ENCODE measurements at regions of chr17 and their contacts with region 1.

Region 1: GRCh38 chr17:42388381-42389134 is at the start of gene STAT3:
- DNase-seq: peak; percentile 100
- H3K4me3 Mint-ChIP-seq: peak within 1 kb of the TSS; percentile 97
- H3K27ac Mint-ChIP-seq: peak within 1 kb of the TSS; percentile 100
- H3K4me1 Mint-ChIP-seq: peaks cover 47% of the 10 kb centered on the region
- H3K27me3 Mint-ChIP-seq: no peaks in the 10 kb centered on the region
- total RNA-seq, gene STAT3: 404 to 408 TPM

Region 2: GRCh38 chr17:42212382-42212781 is 176.2 kb before region 1 on chr17:
- CTCF ChIA-PET with region 1: no interaction called
- intact Hi-C with region 1: no loop called
- DNase-seq: no peak
- H3K4me3 Mint-ChIP-seq: no peak overlapping the region
- H3K27ac Mint-ChIP-seq: no peak overlapping the region
- H3K4me1 Mint-ChIP-seq: no peaks in the 10 kb centered on the region
- H3K27me3 Mint-ChIP-seq: no peaks in the 10 kb centered on the region

Region 3: GRCh38 chr17:42248351-42249179 is 140.0 kb before region 1 on chr17:
- CTCF ChIA-PET with region 1: no interaction called
- intact Hi-C with region 1: loop called (anchors 1 kb)
- DNase-seq: peak; percentile 92
- H3K4me3 Mint-ChIP-seq: peak overlapping the region; percentile 74
- H3K27ac Mint-ChIP-seq: peak overlapping the region; percentile 97
- H3K4me1 Mint-ChIP-seq: peaks cover 71% of the 10 kb centered on the region
- H3K27me3 Mint-ChIP-seq: no peaks in the 10 kb centered on the region

Region 4: GRCh38 chr17:42312285-42313130 is 76.0 kb before region 1 on chr17:
- CTCF ChIA-PET with region 1: interaction called, 18 read pairs
- intact Hi-C with region 1: loop called (anchors 1 kb)
- DNase-seq: peak; percentile 95
- H3K4me3 Mint-ChIP-seq: peak overlapping the region; percentile 44
- H3K27ac Mint-ChIP-seq: peak overlapping the region; percentile 92
- H3K4me1 Mint-ChIP-seq: peaks cover 86% of the 10 kb centered on the region
- H3K27me3 Mint-ChIP-seq: no peaks in the 10 kb centered on the region

Region 5: DNA sequence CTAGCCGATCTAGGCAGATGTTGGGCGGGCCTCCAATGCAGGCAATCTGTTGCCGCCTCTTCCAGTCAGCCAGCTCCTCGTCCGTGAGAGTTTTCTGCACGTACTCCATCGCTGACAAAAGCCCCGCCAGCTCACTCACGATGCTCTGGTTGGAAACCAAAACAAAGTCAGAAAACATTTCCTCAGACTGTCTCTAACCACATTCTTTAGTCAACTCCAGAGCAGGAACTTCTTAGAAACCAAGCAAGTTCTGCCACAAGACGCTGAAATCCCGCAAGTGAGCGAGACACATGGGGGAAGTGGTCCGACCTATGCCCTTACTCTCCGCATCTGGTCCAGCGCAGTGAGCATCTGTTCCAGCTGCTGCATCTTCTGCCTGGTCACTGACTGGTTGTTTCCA is 51.1 kb before region 1 on chr17:
- CTCF ChIA-PET with region 1: interaction called, 7 read pairs
- intact Hi-C with region 1: loop called (anchors 1 kb)
- DNase-seq: peak; percentile 92
- H3K4me3 Mint-ChIP-seq: peak overlapping the region; percentile 43
- H3K27ac Mint-ChIP-seq: peak overlapping the region; percentile 90
- H3K4me1 Mint-ChIP-seq: peaks cover 84% of the 10 kb centered on the region
- H3K27me3 Mint-ChIP-seq: no peaks in the 10 kb centered on the region

Region 6: DNA sequence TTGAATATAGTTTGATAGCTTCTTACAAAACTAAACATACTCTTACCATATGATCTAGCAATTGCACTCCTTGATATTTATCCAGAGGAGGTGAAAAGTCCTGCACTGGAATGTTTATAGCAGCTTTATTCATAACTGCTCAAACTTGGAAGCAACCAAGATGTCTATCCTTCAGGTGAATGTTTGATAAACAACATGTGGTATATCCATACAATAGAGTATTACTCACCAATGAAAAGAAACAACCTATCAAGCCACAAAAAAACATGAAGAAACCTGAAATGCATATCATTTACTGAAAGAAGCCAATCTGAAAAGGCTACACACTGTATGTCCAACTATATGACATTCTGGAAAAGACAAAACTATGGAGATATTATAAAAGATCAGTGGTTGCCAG is 16.4 kb before region 1 on chr17:
- CTCF ChIA-PET with region 1: no interaction called
- intact Hi-C with region 1: no loop called
- DNase-seq: no peak
- H3K4me3 Mint-ChIP-seq: no peak overlapping the region
- H3K27ac Mint-ChIP-seq: no peak overlapping the region
- H3K4me1 Mint-ChIP-seq: peaks cover 73% of the 10 kb centered on the region
- H3K27me3 Mint-ChIP-seq: no peaks in the 10 kb centered on the region